ENCODE measurements at regions of chr2 and their contacts with region 1.

Region 1: GRCh38 chr2:102301867-102302362 is 9.4 kb upstream of the IL1RL1 start:
- DNase-seq: peak; percentile 55
- H3K4me3 Mint-ChIP-seq: peak overlapping the region; percentile 59
- H3K27ac Mint-ChIP-seq: peak overlapping the region; percentile 96
- H3K4me1 Mint-ChIP-seq: peaks cover 76% of the 10 kb centered on the region
- H3K27me3 Mint-ChIP-seq: no peaks in the 10 kb centered on the region

Region 2: GRCh38 chr2:100924520-100925451 is 1377.1 kb before region 1 on chr2:
- intact Hi-C with region 1: no loop called
- DNase-seq: no peak
- H3K4me3 Mint-ChIP-seq: no peak overlapping the region
- H3K27ac Mint-ChIP-seq: peak overlapping the region; percentile 69
- H3K4me1 Mint-ChIP-seq: peaks cover 3% of the 10 kb centered on the region
- H3K27me3 Mint-ChIP-seq: peaks cover 2% of the 10 kb centered on the region

Region 3: DNA sequence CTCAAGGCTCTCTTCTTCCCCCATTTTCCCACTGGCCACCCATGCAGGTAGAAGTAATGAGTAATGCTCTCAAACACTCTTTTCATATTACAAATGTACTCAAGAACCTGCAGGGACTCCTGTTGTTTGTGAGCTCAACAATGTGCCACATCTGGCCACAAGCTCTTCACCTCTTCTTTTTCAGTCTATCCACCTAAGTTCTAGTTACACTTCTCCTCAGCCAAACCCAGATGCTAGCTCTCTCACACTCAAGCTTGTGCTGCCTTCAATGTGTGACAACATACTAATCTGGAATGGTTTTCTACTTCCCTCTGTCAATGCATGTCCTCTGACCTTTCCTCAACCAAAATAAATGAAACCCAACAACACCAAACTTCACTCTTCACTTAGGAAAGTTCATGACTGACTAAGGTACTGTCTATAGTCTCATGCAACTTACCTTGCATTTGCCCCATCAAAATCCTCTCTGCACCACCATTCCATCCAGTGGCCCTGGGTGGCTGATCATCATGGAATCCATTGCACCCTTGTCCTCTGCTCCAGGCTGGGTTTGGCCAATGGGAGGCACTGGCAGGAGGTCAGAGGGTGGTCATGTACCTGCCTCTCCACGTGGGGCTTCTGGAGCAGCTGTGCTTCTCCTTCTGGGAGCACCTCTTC is 48.4 kb after region 1 on chr2:
- intact Hi-C with region 1: loop called (anchors 1 kb)
- DNase-seq: no peak
- H3K4me3 Mint-ChIP-seq: no peak overlapping the region
- H3K27ac Mint-ChIP-seq: peak overlapping the region; percentile 0
- H3K4me1 Mint-ChIP-seq: peaks cover 29% of the 10 kb centered on the region
- H3K27me3 Mint-ChIP-seq: no peaks in the 10 kb centered on the region

Region 4: GRCh38 chr2:102418421-102418961 is 116.6 kb after region 1 on chr2:
- intact Hi-C with region 1: loop called (anchors 1 kb)
- DNase-seq: no peak
- H3K4me3 Mint-ChIP-seq: peak overlapping the region; percentile 73
- H3K27ac Mint-ChIP-seq: peak overlapping the region; percentile 75
- H3K4me1 Mint-ChIP-seq: peaks cover 69% of the 10 kb centered on the region
- H3K27me3 Mint-ChIP-seq: peaks cover 3% of the 10 kb centered on the region

Region 5: DNA sequence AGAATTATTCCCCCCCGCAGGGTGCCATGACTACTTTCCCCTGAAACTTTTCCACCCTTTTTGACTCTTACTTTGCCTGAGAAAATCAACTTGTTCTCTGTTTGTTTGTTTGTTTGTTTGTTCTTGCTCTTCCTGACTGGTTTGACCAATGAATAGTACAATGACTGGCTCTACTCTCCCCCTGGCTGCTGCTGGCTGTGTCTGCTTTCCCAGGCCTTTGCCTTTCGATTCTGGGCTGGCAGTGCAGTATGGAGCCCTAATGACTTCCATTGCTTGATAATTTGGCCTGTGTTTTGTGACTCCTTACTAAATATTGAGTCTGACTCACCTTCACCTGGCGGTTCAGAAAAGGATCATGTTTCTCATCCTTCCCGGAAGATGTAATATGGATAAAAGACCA is 701.0 kb after region 1 on chr2:
- intact Hi-C with region 1: no loop called
- DNase-seq: no peak
- H3K4me3 Mint-ChIP-seq: no peak overlapping the region
- H3K27ac Mint-ChIP-seq: no peak overlapping the region
- H3K4me1 Mint-ChIP-seq: no peaks in the 10 kb centered on the region
- H3K27me3 Mint-ChIP-seq: no peaks in the 10 kb centered on the region